Left cardiac atrium (tissue), 4 donors: ENCODE measurements at regions of chr6 and their contacts with region 1.

Region 1: DNA sequence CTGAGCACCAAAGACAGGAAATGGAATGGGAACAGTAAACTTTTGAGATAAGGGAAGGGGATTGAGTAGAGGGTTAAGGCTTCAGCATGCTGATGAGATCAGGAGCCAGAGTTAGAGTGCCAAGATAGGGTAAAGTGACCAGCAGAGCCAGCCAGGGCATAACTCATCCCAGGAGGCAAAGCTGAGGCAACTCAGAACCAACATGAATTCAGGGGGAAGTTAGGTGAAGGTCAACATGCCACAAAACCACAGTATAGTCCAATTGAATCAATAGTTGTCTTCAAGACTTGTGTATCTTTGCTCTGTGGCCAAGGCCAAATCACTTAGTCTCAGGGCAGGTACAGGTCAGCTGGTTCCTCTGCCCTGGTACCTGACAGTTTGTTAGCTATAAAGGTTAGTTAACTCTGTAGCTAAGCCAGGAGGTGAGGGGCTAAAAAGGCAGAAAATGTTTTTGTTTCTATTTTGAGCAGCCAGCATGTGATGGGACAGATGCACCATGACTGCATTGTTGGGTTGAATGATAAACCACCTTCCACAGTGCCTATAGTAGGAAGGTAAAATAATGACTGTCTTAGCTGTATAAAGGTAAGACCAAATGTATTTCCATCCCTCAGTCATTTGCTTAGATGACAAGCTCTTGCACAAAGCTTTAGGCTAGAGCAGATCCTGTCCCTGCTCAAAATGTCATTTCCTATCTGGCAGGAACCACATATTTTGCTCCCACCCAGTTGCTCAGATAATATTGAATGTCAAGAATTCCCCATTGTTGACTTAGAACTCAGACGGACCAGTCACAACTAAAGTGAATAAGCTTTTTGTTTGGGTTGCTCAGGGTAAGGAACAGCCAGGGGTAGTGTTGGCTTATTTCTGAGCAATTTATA is 15.8 kb downstream of the RNF8 start:
- DNase-seq: no peak
- ATAC-seq: peak in 1 of 2 donors; percentile 43

Region 2: GRCh38 chr6:38012573-38012972 is 643.0 kb after region 1 on chr6:
- intact Hi-C with region 1: loop called in 1 of 2 experiments (anchors 10 kb)
- DNase-seq: no peak
- ATAC-seq: peak in 1 of 2 donors; percentile 51